Mammary epithelial cell (primary cell): ENCODE measurements at regions of chr2 and their contacts with region 1.

Region 1: DNA sequence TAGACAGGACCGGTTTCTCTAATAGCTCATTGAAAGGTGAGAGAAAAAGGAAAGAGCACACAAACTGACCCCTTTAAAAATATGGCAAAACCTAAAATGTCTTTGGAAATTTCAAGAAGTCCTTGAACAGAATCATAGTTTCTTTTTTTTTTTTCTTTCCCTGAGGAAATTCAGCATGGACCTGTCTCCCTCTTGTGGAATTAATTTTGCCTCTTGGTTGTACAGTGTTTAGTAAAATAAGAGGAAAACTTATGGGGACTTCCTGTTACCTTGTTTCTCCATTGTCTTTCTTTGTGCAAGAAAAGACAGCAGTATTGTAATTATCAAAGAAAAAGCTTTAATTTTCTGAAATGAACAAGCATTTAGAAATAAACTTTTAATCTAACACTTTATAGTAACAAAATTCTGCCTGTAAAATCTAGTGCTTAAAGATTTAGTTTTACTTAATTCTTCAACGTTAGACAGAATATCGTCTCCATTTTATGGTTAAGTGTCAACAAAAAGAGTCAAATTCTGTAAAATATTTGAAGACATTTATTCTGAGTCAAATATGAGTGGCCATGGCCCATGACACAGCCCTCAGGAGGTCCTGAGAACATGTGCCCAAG is 176.3 kb upstream of the NABP1 start:
- DNase-seq: peak; percentile 40
- H3K4me3 ChIP-seq: no peak overlapping the region
- H3K27ac ChIP-seq: no peak overlapping the region
- H3K4me1 ChIP-seq: peaks cover 8% of the 10 kb centered on the region
- H3K27me3 ChIP-seq: no peaks in the 10 kb centered on the region
- CTCF ChIP-seq: peak; percentile 58 to 71

Region 2: DNA sequence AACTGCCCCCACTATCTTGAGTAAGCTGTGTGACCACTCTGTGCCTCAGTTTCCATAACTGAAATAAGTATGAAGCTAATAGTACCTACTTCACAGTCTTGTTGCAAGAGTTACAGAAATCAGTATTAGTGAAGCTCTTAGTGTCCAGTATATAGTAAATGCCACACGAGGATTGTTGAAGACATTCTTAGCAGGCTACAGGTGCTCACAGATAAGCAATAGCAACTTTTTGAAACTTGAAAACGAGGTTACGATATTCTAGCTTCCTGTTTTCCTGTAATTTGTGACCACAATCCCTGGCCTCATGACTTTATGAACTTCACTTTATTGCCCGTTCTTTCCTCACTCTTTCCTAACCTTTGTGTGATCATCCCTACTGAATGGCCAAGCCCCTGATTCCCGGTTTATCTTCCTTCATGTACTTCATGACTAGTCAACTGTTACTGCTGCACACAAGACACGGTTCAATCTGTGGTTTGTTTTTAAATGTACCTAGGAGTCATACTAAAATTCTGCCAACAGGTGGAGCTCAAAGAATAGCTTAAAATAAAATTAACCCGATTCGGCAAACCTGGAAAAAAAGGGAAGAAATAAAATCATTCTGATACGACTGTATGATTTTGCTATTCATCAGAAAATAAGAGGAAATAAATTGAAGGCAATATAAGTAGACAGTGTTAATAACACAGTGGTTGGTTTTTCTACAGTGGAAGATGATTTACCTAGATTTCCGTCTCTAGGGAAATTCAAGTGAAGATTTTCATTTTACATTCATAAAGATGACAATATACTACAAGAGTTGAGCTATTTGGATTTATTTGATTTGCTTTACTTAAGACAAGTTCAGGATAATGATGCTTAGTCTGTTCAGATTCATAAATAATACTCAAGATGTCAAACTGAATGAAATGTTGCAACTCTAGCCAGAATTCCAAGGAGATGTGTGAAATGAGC is 449.6 kb before region 1 on chr2:
- CTCF ChIA-PET with region 1: no interaction called
- dilution Hi-C with region 1: no loop called
- in situ Hi-C with region 1: loop called in 1 of 2 experiments (anchors 25 kb)
- intact Hi-C with region 1: loop called (anchors 2 kb)
- DNase-seq: peak; percentile 35
- H3K4me3 ChIP-seq: no peak overlapping the region
- H3K27ac ChIP-seq: no peak overlapping the region
- H3K4me1 ChIP-seq: no peaks in the 10 kb centered on the region
- H3K27me3 ChIP-seq: no peaks in the 10 kb centered on the region
- CTCF ChIP-seq: peak; percentile 54 to 60

Region 3: GRCh38 chr2:191165176-191165643 is 336.5 kb before region 1 on chr2:
- CTCF ChIA-PET with region 1: interaction called, 4 read pairs
- dilution Hi-C with region 1: no loop called
- in situ Hi-C with region 1: loop called (anchors 10 to 25 kb)
- intact Hi-C with region 1: loop called (anchors 1 kb)
- DNase-seq: peak; percentile 58
- H3K4me3 ChIP-seq: no peak overlapping the region
- H3K27ac ChIP-seq: peak overlapping the region; percentile 99
- H3K4me1 ChIP-seq: peaks cover 47% of the 10 kb centered on the region
- H3K27me3 ChIP-seq: no peaks in the 10 kb centered on the region
- CTCF ChIP-seq: peak; percentile 73 to 75

Region 4: GRCh38 chr2:191291471-191291870 is 210.2 kb before region 1 on chr2:
- CTCF ChIA-PET with region 1: no interaction called
- dilution Hi-C with region 1: no loop called
- in situ Hi-C with region 1: no loop called
- intact Hi-C with region 1: loop called (anchors 5 kb)
- DNase-seq: no peak
- H3K4me3 ChIP-seq: no peak overlapping the region
- H3K27ac ChIP-seq: no peak overlapping the region
- H3K4me1 ChIP-seq: peaks cover 23% of the 10 kb centered on the region
- H3K27me3 ChIP-seq: no peaks in the 10 kb centered on the region
- CTCF ChIP-seq: no peak

Region 5: DNA sequence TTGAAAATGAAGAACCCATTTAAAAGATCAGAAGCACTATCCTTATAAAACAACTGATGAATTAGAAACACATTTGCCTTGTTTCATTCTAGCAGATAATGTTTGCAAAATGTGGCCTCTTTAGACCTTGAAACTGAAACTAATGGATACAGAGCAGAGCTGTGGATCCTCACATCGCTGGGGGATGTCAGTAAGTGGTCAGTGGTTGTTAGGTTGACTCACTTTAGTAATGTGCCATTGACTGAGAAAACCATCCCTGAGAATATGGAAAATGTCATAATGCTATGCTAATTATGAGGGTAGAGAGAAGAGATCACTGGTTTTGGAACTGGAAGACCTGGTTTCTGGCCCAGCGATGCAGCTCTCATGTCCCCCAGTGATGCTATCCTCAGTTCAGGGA is 79.7 kb before region 1 on chr2:
- CTCF ChIA-PET with region 1: no interaction called
- dilution Hi-C with region 1: loop called (anchors 5 kb)
- in situ Hi-C with region 1: no loop called
- intact Hi-C with region 1: loop called (anchors 2 kb)
- DNase-seq: no peak
- H3K4me3 ChIP-seq: no peak overlapping the region
- H3K27ac ChIP-seq: no peak overlapping the region
- H3K4me1 ChIP-seq: no peaks in the 10 kb centered on the region
- H3K27me3 ChIP-seq: no peaks in the 10 kb centered on the region
- CTCF ChIP-seq: no peak

Region 6: GRCh38 chr2:191434072-191434471 is 67.6 kb before region 1 on chr2:
- CTCF ChIA-PET with region 1: no interaction called
- dilution Hi-C with region 1: loop called (anchors 5 kb)
- in situ Hi-C with region 1: no loop called
- intact Hi-C with region 1: loop called (anchors 2 kb)
- DNase-seq: peak; percentile 31
- H3K4me3 ChIP-seq: no peak overlapping the region
- H3K27ac ChIP-seq: no peak overlapping the region
- H3K4me1 ChIP-seq: no peaks in the 10 kb centered on the region
- H3K27me3 ChIP-seq: no peaks in the 10 kb centered on the region
- CTCF ChIP-seq: no peak